ENCODE measurements at regions of chr2 and their contacts with region 1.

Region 1: DNA sequence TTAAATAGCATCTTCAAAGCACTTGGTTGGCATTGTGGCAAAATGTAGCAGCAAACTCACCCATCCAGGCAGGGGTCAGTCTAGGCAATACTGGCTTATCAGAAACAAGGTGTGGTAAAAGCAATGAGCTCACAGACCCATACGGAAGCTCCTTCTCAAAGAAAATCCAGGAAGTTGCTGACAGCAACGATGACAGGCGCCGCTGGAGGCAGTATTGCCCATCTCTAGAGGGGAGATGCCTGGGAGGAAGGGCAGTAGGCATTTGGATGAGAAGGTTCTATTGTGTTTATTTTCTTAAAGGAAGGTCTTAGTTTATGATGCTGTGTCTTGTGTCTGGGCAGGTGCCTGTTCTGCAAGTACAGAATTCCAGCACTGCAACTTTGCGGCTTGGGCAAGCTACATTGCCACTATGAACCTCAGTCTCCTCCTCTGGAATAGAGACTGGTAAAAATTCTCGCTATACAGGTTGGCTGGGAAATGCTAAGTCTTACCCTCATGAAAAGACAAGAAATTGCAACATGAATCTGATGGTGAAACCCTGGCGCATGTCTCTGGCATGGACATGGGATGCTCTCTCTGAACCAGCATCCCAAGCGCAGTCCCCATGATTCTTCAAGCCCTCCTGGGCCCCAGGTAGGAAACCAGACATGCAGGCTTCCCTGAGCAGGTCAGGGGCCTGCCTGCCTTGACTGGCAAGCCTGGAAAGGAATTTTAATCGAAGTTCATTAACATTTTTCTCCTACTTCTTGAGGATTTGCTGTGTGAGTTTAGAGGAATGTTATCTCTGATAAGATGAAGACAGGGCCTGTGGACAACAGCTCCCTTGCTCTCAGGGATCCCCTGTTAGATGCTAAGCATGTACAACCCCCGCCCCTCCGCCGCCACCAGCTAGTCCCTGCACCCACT is 156.0 kb downstream of the TFCP2L1 start:
- DNase-seq: peak; percentile 65 to 74
- H3K4me3 ChIP-seq: no peak overlapping the region
- H3K27ac ChIP-seq: no peak overlapping the region
- H3K4me1 ChIP-seq: peaks cover 0 to 2% of the 10 kb centered on the region in 2 donors
- H3K27me3 ChIP-seq: no peaks in the 10 kb centered on the region
- CTCF ChIP-seq: peak in 5 of 6 experiments; percentile 33 to 76 (median 66)
- POLR2A ChIP-seq: no peak

Region 2: DNA sequence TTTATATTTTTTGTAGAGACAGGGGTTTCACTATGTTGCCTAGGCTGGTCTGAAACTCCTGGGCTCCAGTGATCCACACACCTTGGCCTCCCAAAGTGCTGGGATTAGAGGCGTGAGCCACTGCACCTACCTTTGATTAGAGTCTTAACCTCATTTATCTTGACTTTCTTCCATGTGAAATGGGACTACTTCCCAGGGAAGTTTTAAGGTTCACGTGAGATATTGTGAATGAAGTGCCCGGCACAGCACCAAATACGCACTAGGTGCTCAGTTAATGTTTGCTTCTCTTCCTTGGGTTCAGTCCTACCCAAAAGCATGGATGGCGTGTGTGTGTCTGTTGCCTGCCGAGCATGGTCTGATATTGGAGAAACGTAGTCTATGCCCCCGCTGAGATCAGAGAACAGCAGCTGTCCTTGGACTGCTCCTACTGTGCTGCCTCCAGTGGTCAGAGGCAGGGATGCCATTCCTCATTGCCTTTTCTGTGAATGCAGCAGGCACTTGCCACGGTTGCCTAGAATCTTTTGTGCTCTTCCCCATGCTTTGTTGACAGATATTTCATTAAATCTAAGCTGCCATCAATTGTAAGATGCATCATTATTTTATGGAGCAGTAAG is 168.3 kb after region 1 on chr2:
- intact Hi-C with region 1: loop called (anchors 10 kb)
- DNase-seq: peak; percentile 49 to 55
- H3K4me3 ChIP-seq: no peak overlapping the region
- H3K27ac ChIP-seq: no peak overlapping the region
- H3K4me1 ChIP-seq: peaks cover 0 to 4% of the 10 kb centered on the region in 2 donors
- H3K27me3 ChIP-seq: no peaks in the 10 kb centered on the region
- CTCF ChIP-seq: peak in 4 of 6 experiments; percentile 38 to 62 (median 58)
- POLR2A ChIP-seq: no peak

Region 3: DNA sequence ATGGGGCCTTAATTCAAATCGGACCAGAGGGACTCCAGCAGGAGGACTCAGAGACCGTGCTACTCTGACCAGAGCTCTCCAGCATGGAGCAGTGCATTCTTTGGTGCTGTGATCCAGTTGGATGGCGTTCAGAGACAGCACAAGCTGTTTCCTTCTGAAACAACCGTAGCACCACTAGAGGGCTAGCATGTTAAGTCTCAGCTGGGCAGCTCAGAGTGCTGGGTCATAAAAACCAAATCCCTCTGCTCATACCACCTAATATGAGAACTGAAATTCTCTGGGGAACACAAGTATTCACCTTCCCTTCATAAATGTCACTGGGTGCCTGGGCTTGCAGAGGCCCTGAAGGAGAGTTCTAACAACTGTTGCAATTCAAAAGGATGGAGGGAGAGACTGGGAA is 253.7 kb after region 1 on chr2:
- intact Hi-C with region 1: no loop called
- DNase-seq: no peak
- H3K4me3 ChIP-seq: no peak overlapping the region
- H3K27ac ChIP-seq: no peak overlapping the region
- H3K4me1 ChIP-seq: no peaks in the 10 kb centered on the region
- H3K27me3 ChIP-seq: no peaks in the 10 kb centered on the region
- CTCF ChIP-seq: no peak
- POLR2A ChIP-seq: no peak

Measured in thyroid gland (tissue), 4 donors.